Body of pancreas (tissue), 4 donors: ENCODE measurements at regions of chr22 and their contacts with region 1.

Region 1: DNA sequence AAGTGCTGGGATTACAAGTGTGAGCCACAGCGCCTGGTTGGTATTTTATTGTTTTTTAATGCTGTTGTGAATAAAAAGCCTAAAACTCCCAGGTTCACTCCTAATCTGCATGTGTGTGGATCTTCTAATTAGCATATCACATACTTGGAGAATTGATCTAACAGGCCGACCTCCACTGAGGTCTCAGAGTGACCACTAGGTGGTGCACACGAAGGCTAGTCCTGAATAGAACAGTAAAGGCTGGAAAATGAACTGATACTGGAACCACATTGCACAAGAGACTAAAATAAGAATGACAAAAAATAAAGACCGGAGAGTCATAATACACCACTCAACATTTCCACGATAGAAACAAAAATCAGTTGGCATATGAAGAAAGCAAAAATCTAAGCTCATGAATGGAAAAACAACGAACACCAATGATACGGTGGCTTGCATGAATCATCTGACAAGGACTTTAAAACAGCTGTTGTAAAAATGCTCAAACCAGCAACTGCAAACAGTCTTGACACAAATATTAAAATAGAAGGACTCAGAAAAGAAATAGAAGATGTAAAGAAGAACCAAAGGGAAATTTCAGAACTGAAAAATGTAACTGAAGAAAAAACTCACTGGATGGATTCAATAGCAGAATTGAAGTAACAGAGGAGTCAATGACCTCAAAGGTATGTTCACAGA is 19.2 kb downstream of the PIM3 start:
- DNase-seq: peak in 3 of 4 donors; percentile 43 to 65 (median 49)
- ATAC-seq: peak; percentile 77
- H3K4me3 ChIP-seq: no peak overlapping the region
- H3K27ac ChIP-seq: no peak overlapping the region
- H3K4me1 ChIP-seq: peaks cover 10% of the 10 kb centered on the region
- H3K27me3 ChIP-seq: peaks cover 0 to 9% of the 10 kb centered on the region in 2 donors
- CTCF ChIP-seq: peak; percentile 17 to 64 (median 50)
- POLR2A ChIP-seq: no peak

Region 2: GRCh38 chr22:49936018-49936952 is 43.4 kb before region 1 on chr22:
- intact Hi-C with region 1: loop called (anchors 10 kb)
- DNase-seq: peak; percentile 85 to 94 (median 90)
- ATAC-seq: peak; percentile 62
- H3K4me3 ChIP-seq: no peak overlapping the region
- H3K27ac ChIP-seq: peak overlapping the region; percentile 74 to 94 (median 82)
- H3K4me1 ChIP-seq: peaks cover 46% of the 10 kb centered on the region
- H3K27me3 ChIP-seq: no peaks in the 10 kb centered on the region
- CTCF ChIP-seq: no peak
- POLR2A ChIP-seq: peak; percentile 25 to 60 (median 49)

Region 3: DNA sequence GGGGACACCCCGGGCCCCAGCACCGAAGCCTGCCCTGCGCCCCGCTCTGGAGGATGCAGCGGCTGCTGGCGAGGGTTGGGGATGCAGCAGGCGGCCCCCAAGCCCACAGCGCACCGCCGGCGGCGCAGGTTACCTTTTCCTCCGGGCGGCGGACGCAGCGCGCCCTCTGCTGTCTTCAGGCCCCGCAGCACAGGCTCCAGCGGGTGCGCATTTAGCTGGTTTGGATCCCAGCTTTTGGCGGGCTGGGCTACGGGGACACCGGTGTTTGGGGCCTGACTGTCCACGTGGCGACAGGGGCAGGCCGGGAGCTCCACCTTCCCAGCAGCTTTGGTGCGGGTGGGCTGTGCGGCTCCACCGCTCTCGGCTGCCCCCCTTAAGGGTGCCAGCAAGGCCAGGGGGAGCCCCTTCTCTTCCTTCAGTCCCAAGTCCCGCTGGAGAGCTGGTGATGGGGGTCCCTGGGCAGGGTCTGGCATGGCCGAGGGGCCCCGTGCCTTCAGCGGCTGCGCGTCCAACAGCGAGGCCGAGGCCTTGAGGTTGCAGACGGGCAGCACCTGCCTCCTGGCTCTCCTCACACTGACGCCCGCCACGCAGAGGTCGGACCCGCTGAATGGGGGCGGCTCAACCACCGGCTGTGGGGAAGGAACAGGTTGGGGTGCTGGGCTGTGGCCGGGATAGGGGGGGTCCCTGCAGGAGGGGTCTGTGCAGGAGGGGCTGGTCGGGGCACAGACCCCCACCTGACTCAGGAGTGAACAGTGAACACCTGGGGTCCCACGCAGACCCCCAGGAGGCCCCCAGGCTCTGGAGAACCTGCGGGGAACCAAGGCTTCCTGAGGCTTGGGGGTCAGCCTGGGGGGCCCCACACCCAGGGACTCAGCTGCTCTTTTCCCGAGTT is 50.8 kb after region 1 on chr22:
- intact Hi-C with region 1: no loop called
- DNase-seq: peak; percentile 75 to 82 (median 79)
- ATAC-seq: peak; percentile 89
- H3K4me3 ChIP-seq: no peak overlapping the region
- H3K27ac ChIP-seq: no peak overlapping the region
- H3K4me1 ChIP-seq: peaks cover 10% of the 10 kb centered on the region
- H3K27me3 ChIP-seq: no peaks in the 10 kb centered on the region
- CTCF ChIP-seq: peak; percentile 82 to 97 (median 93)
- POLR2A ChIP-seq: no peak

Region 4: DNA sequence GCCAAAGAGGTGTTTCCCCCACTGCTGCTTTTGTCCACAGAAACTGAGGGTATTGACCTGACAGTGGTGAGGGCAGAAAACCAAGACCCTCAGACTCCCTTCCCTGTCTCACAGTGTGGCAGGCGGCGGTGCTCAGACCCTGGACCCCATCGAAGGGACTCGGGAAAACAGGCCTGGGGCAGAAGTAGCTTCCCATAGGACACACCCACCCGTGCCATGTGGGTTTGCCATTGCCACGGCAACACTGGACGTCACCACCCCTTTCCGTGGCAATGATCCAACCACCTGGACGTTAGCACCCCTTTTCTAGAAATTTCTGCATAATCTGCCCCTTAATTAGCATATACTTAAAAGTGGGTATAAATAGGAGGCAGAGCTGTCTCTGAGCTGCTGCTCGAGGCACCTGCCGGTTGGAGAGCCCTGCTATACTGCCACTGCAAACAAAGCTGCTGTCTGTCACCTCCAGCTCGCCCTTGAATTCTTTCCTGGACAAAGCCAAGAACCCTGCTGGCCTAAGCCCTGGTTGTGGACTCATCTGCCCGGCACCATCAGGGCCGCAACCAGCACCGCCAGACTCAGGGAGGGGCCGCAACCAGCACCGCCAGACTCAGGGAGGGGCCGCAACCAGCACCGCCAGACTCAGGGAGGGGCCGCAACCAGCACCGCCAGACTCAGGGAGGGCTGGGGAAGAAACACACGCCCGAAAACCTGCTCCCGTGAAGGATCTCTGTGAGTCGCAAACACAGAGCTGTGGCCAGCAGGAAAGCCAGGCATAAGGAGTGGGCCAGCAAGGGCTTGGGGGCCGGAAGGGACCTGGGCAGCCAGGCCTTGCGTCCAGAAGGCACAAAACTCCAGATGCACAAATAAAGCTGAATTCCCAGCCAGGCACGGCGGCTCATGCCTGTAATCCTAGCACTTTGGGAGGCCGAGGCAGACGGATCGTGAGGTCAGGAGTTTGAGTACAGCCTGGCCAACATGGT is 95.1 kb after region 1 on chr22:
- intact Hi-C with region 1: no loop called
- DNase-seq: peak in 3 of 4 donors; percentile 40 to 78 (median 77)
- ATAC-seq: no peak
- H3K4me3 ChIP-seq: no peak overlapping the region
- H3K27ac ChIP-seq: peak overlapping the region in 1 of 4 donors; percentile 26
- H3K4me1 ChIP-seq: peaks cover 5% of the 10 kb centered on the region
- H3K27me3 ChIP-seq: no peaks in the 10 kb centered on the region
- CTCF ChIP-seq: no peak
- POLR2A ChIP-seq: peak in 2 of 3 donors; percentile 53 to 55

Region 5: GRCh38 chr22:50481440-50482106 is 501.8 kb after region 1 on chr22 and contains the start of gene ADM2:
- intact Hi-C with region 1: no loop called
- DNase-seq: peak in 3 of 4 donors; percentile 59 to 77 (median 73)
- ATAC-seq: peak; percentile 22
- H3K4me3 ChIP-seq: peak within 1 kb of the TSS; percentile 22 to 39
- H3K27ac ChIP-seq: peak within 1 kb of the TSS; percentile 80 to 91 (median 83)
- H3K4me1 ChIP-seq: peaks cover 56% of the 10 kb centered on the region
- H3K27me3 ChIP-seq: no peaks in the 10 kb centered on the region
- CTCF ChIP-seq: no peak
- POLR2A ChIP-seq: peak in 2 of 3 donors; percentile 4 to 33
- total RNA-seq, gene ADM2: 7.3 to 8.2 TPM